ENCODE measurements at regions of chr4 and their contacts with region 1.

Region 1: DNA sequence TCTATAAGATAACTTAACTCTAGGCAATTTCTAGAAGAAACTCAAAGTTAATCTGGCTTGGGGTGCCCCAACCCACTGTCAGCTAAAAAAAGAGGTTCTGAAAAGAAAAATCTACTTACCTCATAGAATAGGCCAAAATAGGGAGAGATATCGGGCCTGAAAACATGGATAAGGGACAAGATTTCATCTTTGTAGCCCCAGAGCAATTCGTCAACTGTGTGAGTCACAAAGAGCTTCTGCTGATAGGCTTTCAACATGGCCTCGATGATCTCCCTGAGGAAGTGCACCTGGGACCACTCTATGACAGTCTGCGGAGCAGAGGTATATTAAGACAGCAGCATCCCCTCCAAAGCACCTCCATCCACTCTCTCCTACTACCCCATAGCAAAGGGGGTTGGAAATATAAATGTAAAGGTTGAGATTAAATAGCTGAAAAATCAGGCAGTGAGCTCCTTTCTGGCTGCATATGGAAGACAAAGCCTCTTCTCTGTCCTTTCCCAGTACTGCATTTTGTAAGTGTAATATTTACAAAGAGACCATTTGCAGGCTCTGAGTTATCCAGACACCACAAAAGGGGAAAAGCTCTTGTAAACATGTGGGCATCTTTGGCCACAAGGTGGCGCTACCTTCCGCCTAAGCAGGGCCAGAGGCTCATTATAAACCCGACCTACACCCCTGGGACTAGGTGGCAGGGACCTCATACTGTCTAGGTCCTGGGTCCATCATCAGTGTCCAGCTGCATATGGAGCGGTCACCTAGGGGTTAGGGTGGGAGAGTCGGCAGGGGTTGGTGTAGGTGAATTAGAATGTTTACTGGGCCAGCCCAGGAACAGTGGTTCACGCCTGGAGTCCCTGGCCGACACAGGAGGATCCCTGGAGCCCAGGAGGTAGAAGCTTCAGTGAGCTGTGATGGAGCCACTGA is 31.5 kb upstream of the NUP54 start:
- DNase-seq: peak; percentile 79
- H3K4me3 ChIP-seq: no peak overlapping the region; a peak in 1 of 4 replicates
- H3K27ac ChIP-seq: no peak overlapping the region; a peak in 1 of 4 replicates
- H3K4me1 ChIP-seq: peaks cover 0 to 2% of the 10 kb centered on the region in 2 experiments; a peak in 1 of 4 replicates
- H3K27me3 ChIP-seq: no peaks in the 10 kb centered on the region
- CTCF ChIP-seq: peak; percentile 95
- EP300 ChIP-seq: no peak
- RAD21 ChIP-seq: peak; percentile 95

Region 2: GRCh38 chr4:75940692-75941253 is 238.9 kb before region 1 on chr4 and contains the start of gene NAAA:
- CTCF ChIA-PET with region 1: no interaction called
- POLR2A ChIA-PET with region 1: no interaction called
- DNase-seq: peak; percentile 92
- H3K4me3 ChIP-seq: peak within 1 kb of the TSS; percentile 45 to 57
- H3K27ac ChIP-seq: no peak within 1 kb of the TSS
- H3K4me1 ChIP-seq: no peaks in the 10 kb centered on the region; a peak in 1 of 4 replicates
- H3K27me3 ChIP-seq: no peaks in the 10 kb centered on the region
- CTCF ChIP-seq: peak; percentile 31; the same call in 1 of the 2 replicates
- EP300 ChIP-seq: no peak
- RAD21 ChIP-seq: no peak
- polyA plus RNA-seq, gene NAAA: 3.4 and 3.5 TPM in 2 replicates

Region 3: GRCh38 chr4:76156635-76157034 is 23.0 kb before region 1 on chr4:
- CTCF ChIA-PET with region 1: interaction called, 11 read pairs
- POLR2A ChIA-PET with region 1: no interaction called
- DNase-seq: no peak
- H3K4me3 ChIP-seq: no peak overlapping the region
- H3K27ac ChIP-seq: no peak overlapping the region
- H3K4me1 ChIP-seq: no peaks in the 10 kb centered on the region
- H3K27me3 ChIP-seq: no peaks in the 10 kb centered on the region
- CTCF ChIP-seq: no peak
- EP300 ChIP-seq: no peak
- RAD21 ChIP-seq: no peak

Region 4: GRCh38 chr4:76198411-76199237 is 19.0 kb after region 1 on chr4:
- CTCF ChIA-PET with region 1: interaction called, 37 read pairs
- POLR2A ChIA-PET with region 1: no interaction called
- DNase-seq: peak; percentile 61
- H3K4me3 ChIP-seq: peak overlapping the region in 1 of 2 experiments; percentile 14; a peak in 1 of 4 replicates
- H3K27ac ChIP-seq: peak overlapping the region; percentile 73 to 99
- H3K4me1 ChIP-seq: peaks cover 27 to 49% of the 10 kb centered on the region in 2 experiments
- H3K27me3 ChIP-seq: no peaks in the 10 kb centered on the region
- CTCF ChIP-seq: no peak
- EP300 ChIP-seq: 0 out of 4 replicates have a peak, but pooled peaks of 1 of the 2 experiments have one; percentile 4
- RAD21 ChIP-seq: no peak

Region 5: DNA sequence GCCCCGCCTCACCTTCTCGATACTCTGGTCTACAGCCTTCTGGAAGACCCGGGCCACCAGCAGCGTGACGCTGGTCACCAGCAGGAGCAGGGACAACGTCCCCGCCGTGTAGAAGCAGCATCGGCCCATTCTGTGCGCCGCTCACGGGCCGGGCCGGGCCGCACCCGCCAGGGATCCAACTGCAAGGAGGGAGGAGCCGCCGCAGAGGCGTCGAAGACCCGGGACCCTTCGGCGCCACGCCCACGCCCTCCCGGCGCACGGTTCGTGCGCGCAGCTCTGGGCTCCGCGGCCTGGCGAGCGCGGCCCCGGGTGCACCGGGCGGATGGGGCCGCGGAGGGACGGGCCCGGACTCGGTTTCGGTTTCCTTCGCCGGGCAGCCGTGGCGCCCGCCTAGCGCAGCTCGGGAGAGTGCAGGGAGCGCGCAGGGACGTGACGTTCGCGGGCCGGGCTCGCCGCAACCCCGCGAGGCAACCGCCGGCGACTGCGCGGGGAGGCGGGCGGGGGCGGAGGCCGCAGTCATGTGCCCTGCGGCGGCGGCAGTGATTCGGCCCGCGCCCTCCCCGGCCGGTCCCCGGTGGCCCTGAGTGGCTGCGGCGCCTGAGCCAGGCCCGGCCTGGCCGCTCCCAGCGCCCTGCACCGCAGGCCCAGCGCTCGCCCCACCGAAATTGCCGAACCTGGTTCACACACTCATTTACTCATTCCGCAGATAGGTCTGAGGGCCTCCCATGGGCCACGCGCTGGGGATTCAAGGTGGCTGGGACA is 33.9 kb after region 1 on chr4 and contains the start of gene SCARB2:
- CTCF ChIA-PET with region 1: interaction called, 65 read pairs
- POLR2A ChIA-PET with region 1: interaction called, 4 read pairs
- DNase-seq: peak; percentile 96
- H3K4me3 ChIP-seq: peak within 1 kb of the TSS; percentile 85 to 86
- H3K27ac ChIP-seq: peak within 1 kb of the TSS; percentile 88 to 95
- H3K4me1 ChIP-seq: peaks cover 18 to 32% of the 10 kb centered on the region in 2 experiments; a peak in 3 of 4 replicates
- H3K27me3 ChIP-seq: no peaks in the 10 kb centered on the region
- CTCF ChIP-seq: no peak
- EP300 ChIP-seq: no peak
- RAD21 ChIP-seq: no peak
- polyA plus RNA-seq, gene SCARB2: 81.3 and 82.6 TPM in 2 replicates

Region 6: GRCh38 chr4:76251441-76252270 is 72.0 kb after region 1 on chr4 and contains the start of gene FAM47E:
- CTCF ChIA-PET with region 1: interaction called, 42 read pairs
- POLR2A ChIA-PET with region 1: no interaction called
- DNase-seq: peak; percentile 90
- H3K4me3 ChIP-seq: peak within 1 kb of the TSS; percentile 67 to 72
- H3K27ac ChIP-seq: peak within 1 kb of the TSS; percentile 52 to 81
- H3K4me1 ChIP-seq: peaks cover 0 to 9% of the 10 kb centered on the region in 2 experiments; a peak in 1 of 4 replicates
- H3K27me3 ChIP-seq: peaks cover 9% of the 10 kb centered on the region; the same call in 1 of the 2 replicates
- CTCF ChIP-seq: peak; percentile 59
- EP300 ChIP-seq: peak in 1 of 2 experiments; percentile 38; a peak in 1 of 4 replicates
- RAD21 ChIP-seq: peak; percentile 49
- polyA plus RNA-seq, gene FAM47E: 1.8 and 2.5 TPM in 2 replicates

Region 7: DNA sequence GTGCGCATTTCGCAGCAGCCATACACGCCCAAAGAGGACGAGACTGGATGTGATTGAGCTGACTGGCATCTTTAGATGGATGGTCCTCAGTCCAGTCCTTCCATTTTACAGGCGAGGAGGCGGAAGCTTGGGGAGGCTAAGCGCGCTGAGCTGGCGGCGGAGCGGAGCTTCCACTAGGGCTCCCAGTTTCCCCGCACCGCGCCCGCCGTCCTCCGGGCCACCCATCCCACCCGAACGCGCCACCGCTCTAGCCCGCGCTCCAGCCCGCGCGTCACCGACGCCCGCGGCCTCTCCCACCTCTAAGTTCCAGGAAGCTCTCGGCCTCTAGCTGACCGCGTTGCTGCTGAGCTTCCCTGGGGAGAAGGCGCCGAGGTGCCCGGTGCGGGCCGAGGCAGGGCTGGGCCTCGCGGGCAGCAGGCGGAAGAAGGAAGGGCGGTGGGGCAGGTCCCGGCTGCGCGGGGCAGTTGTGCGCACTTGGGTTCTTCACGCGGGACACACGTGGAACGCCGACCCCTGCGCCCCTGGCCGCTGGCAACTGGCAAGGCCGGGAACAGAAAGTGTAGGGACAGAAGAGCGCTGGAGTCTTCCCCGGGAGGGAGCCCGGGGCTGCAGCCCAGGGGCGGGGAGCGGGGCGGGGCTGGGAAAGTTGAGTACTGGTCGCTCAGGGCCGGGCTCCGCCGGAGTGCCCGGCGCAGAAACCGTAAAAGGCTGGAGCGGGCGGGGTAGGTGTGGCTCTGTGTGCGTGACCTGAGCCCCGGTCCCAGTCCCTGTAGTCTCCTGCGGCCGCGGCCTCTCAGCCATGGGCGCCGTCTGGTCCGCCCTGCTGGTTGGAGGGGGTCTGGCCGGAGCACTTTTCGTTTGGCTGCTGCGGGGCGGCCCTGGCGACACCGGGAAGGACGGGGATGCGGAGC is 126.6 kb after region 1 on chr4 and contains the start of gene STBD1:
- CTCF ChIA-PET with region 1: interaction called, 55 read pairs
- POLR2A ChIA-PET with region 1: interaction called, 5 read pairs
- DNase-seq: peak; percentile 86
- H3K4me3 ChIP-seq: peak within 1 kb of the TSS; percentile 92
- H3K27ac ChIP-seq: peak within 1 kb of the TSS; percentile 83 to 92
- H3K4me1 ChIP-seq: peaks cover 10 to 32% of the 10 kb centered on the region in 2 experiments; a peak in 2 of 4 replicates
- H3K27me3 ChIP-seq: no peaks in the 10 kb centered on the region
- CTCF ChIP-seq: no peak
- EP300 ChIP-seq: no peak; a peak in 1 of 4 replicates
- RAD21 ChIP-seq: 0 out of 2 replicates have a peak, but pooled peaks have one; percentile 4
- polyA plus RNA-seq, gene STBD1: 1.6 and 1.8 TPM in 2 replicates

Region 8: GRCh38 chr4:76430519-76431388 is 251.1 kb after region 1 on chr4:
- CTCF ChIA-PET with region 1: interaction called, 16 read pairs
- POLR2A ChIA-PET with region 1: no interaction called
- DNase-seq: peak; percentile 67
- H3K4me3 ChIP-seq: peak overlapping the region in 1 of 2 experiments; percentile 40; a peak in 1 of 4 replicates
- H3K27ac ChIP-seq: no peak overlapping the region
- H3K4me1 ChIP-seq: no peaks in the 10 kb centered on the region
- H3K27me3 ChIP-seq: no peaks in the 10 kb centered on the region
- CTCF ChIP-seq: peak; percentile 94
- EP300 ChIP-seq: no peak
- RAD21 ChIP-seq: peak; percentile 83

Measured in SK-N-SH (cell line).